ENCODE measurements at regions of chr7 and their contacts with region 1.

Region 1: DNA sequence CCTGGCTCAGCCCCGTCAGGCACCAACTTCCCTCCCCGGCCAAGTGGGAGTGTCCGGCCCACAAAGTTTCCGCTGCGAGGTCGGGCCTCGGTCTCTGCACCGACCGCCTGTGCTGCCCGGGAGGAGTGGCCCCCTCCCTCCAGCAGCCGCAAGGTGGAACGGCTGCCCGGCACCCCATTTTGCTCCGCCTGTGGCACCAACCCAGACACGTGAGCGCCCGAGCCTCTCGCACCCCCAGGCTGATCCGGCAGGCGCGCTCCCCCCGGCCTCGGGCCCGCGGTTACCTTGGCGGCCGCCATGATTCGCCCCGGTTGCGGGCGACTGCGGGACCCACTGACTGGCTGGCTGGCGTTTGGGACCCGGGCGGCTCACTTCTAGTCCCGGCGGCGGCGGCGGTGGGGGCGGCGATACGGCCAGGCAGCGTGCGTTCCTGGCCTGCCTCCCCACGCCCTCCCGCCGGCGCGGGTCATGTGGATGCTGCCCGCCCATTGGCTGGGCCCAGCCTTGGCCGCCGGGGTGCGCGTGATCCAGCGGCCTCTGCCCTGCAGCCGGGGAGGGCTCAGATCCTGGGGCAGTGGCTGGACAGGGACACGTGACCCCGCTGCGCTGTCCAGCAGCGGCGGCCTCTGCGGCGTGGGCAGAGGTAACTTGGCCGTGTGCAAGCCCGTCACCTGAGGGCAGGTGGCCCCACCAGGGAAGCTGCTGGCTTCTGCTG is at the start of gene SLC25A13:
- DNase-seq: peak; percentile 94 to 97 (median 96)
- ATAC-seq: peak; percentile 98 to 99 (median 99)
- H3K4me3 ChIP-seq: peak within 1 kb of the TSS; percentile 59 to 100 (median 96)
- H3K27ac ChIP-seq: peak within 1 kb of the TSS; percentile 90 to 99 (median 98)
- H3K4me1 ChIP-seq: peaks cover 6 to 43% (median 29%) of the 10 kb centered on the region in 12 donors
- H3K27me3 ChIP-seq: no peaks in the 10 kb centered on the region
- CTCF ChIP-seq: peak in 1 of 12 donors; percentile 14
- POLR2A ChIP-seq: peak in 1 of 2 donors; percentile 66
- total RNA-seq, gene SLC25A13: 5.3 to 17.9 (median 11.4) TPM

Region 2: GRCh38 chr7:96179837-96180236 is 142.0 kb before region 1 on chr7:
- intact Hi-C with region 1: loop called in 1 of 10 experiments (anchors 10 kb)
- DNase-seq: no peak
- ATAC-seq: no peak
- H3K4me3 ChIP-seq: no peak overlapping the region
- H3K27ac ChIP-seq: no peak overlapping the region
- H3K4me1 ChIP-seq: no peaks in the 10 kb centered on the region
- H3K27me3 ChIP-seq: no peaks in the 10 kb centered on the region
- CTCF ChIP-seq: no peak
- POLR2A ChIP-seq: no peak

Region 3: GRCh38 chr7:96236198-96237039 is 85.4 kb before region 1 on chr7:
- intact Hi-C with region 1: loop called in 4 of 10 experiments (anchors 5 to 10 kb)
- DNase-seq: peak in 4 of 5 donors; percentile 61 to 79 (median 72)
- ATAC-seq: peak; percentile 85 to 93 (median 89)
- H3K4me3 ChIP-seq: no peak overlapping the region
- H3K27ac ChIP-seq: peak overlapping the region in 11 of 12 donors; percentile 31 to 80 (median 58)
- H3K4me1 ChIP-seq: peaks cover 0 to 47% (median 27%) of the 10 kb centered on the region in 12 donors
- H3K27me3 ChIP-seq: no peaks in the 10 kb centered on the region
- CTCF ChIP-seq: no peak
- POLR2A ChIP-seq: no peak

Region 4: DNA sequence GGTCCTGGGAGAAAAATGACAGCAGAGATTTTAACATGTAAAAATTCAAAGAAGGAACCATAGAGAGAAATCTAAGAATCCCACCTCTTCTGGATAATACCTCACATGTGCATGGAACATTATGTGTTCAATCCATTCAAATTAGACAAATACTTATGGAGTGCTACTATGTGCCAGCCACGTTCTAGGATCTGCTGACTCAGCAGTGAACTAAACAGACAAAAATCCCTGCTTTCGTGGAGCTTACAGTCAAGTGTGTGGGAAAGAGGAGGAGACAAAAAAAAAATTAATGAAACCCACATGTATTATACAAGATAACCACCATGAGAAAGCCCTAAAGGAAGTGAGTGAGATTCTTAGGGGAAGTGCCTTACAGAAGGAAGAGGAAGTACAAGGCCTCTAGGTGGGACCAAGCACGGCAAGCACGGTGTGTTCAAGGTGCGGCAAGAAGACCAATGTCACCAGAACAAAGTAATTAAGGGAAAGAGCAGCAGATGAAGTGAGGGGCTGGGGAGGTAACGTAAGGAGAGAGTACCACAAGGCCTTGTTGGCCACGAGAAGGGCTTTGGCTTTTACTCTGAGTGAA is 70.9 kb before region 1 on chr7:
- intact Hi-C with region 1: loop called in 1 of 10 experiments (anchors 10 kb)
- DNase-seq: no peak
- ATAC-seq: no peak
- H3K4me3 ChIP-seq: no peak overlapping the region
- H3K27ac ChIP-seq: no peak overlapping the region
- H3K4me1 ChIP-seq: peaks cover 0 to 7% (median 0%) of the 10 kb centered on the region in 12 donors
- H3K27me3 ChIP-seq: no peaks in the 10 kb centered on the region
- CTCF ChIP-seq: no peak
- POLR2A ChIP-seq: no peak

Region 5: DNA sequence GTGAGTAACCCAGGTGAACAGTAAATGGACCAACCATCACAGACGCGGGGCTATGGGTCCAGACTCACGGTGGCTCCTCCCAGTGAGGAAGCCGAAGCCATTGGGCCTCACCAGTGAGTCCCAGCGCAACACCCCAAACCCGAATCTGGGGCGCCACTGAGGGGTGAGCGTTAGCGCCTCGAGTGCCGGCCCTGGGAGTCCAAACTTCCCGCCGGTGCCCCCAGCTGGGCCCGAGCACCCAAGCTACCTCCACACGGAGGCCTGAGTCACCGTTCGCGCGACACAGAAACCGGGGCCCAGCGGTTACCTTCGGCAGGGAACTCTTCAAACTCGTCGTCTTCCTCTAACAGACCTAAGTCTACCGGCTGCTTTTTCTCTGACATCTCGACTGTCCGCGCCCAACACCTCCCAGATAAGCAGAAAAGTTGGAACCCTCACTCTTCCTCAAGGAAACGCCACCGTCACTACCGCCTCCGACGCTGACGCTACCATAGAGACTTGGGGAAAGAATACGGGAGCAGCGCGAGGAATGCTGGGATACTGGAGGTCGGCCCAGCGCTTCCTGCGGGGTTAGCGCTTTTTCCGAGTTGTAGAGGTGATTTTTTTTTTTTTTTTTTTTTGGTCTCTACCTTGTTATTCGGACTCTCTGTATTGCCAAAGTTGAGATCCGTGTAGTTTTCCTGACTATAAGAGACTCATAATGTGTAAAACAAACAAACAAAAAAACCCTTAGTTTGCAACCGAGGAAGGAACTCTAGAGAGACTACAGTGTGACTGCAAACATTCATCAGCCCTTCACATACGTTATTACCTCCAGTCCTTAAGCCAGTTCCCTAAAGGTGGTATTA is 387.8 kb after region 1 on chr7 and contains the start of gene SEM1:
- intact Hi-C with region 1: loop called in 4 of 10 experiments (anchors 5 to 10 kb)
- DNase-seq: peak; percentile 87 to 93 (median 90)
- ATAC-seq: peak; percentile 98 to 100 (median 100)
- H3K4me3 ChIP-seq: peak within 1 kb of the TSS; percentile 61 to 99 (median 90)
- H3K27ac ChIP-seq: peak within 1 kb of the TSS; percentile 60 to 93 (median 89)
- H3K4me1 ChIP-seq: peaks cover 6 to 29% (median 22%) of the 10 kb centered on the region in 12 donors
- H3K27me3 ChIP-seq: no peaks in the 10 kb centered on the region
- CTCF ChIP-seq: no peak
- POLR2A ChIP-seq: peak in 1 of 2 donors; percentile 41
- total RNA-seq, gene SEM1: 25.5 to 66.2 (median 42.5) TPM

Measured in heart left ventricle (tissue), 16 donors.